ENCODE measurements at regions of chr22 and their contacts with region 1.

Region 1: DNA sequence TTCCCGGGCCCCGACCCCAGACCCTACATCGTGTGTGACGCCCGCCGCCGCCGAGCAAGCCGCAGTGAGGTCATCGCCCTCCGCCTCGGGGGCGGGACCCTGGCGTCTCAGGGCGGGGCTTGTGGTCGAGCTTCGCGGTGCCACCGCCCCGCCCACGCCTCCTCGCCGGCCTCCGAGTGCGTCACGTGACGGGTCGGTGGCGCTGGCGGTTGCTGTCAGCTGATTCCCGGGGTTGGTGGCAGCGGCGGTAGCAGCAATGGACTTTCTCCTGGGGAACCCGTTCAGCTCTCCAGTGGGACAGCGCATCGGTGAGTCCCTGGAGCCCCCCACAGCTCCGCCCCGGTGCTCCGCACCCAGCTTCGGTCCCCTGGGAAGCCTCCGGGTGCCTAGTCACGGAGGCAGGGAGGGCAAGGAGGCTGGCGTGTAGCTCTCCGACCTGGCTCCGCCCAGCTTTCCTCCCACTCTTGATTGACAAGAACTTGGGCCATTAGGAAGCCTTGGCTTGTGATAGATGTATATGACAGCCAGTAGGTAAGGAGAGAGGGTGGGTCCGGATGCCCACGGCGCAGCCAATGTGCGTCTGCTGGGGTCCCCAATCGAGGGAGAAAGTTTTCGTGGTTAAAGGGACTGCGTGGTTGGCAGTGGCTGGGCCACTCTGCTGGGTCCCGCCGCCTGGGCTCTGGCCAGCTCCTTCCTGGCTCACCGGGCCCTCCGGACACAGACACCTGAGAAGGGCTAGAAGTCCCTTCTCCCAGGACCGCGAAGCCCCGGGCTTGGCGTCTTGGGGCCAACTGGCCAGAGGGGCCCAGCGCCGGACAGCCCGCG is at the start of gene TOM1:
- DNase-seq: peak; percentile 95 to 99 (median 98)
- ATAC-seq: peak; percentile 83
- H3K4me3 ChIP-seq: peak within 1 kb of the TSS; percentile 75 to 86
- H3K4me3 Mint-ChIP-seq: peak within 1 kb of the TSS; percentile 94
- H3K27ac ChIP-seq: peak within 1 kb of the TSS; percentile 92 to 93
- H3K27ac Mint-ChIP-seq: peak within 1 kb of the TSS; percentile 99
- H3K4me1 ChIP-seq: peaks cover 13% of the 10 kb centered on the region
- H3K4me1 Mint-ChIP-seq: peaks cover 35% of the 10 kb centered on the region
- H3K27me3 ChIP-seq: no peaks in the 10 kb centered on the region
- H3K27me3 Mint-ChIP-seq: no peaks in the 10 kb centered on the region
- CTCF ChIP-seq: no peak
- total RNA-seq, gene TOM1: 166 to 170 TPM

Region 2: GRCh38 chr22:35257321-35258190 is 42.3 kb before region 1 on chr22 and contains the start of gene HMGXB4:
- CTCF ChIA-PET with region 1: interaction called, 7 read pairs
- POLR2A ChIA-PET with region 1: interaction called, 31 read pairs
- intact Hi-C with region 1: loop called (anchors 1 kb)
- DNase-seq: peak; percentile 74 to 95 (median 87)
- ATAC-seq: peak; percentile 91
- H3K4me3 ChIP-seq: peak within 1 kb of the TSS; percentile 72 to 90
- H3K4me3 Mint-ChIP-seq: peak within 1 kb of the TSS; percentile 93
- H3K27ac ChIP-seq: peak within 1 kb of the TSS; percentile 74 to 75
- H3K27ac Mint-ChIP-seq: peak within 1 kb of the TSS; percentile 96
- H3K4me1 ChIP-seq: peaks cover 16% of the 10 kb centered on the region
- H3K4me1 Mint-ChIP-seq: peaks cover 28% of the 10 kb centered on the region
- H3K27me3 ChIP-seq: no peaks in the 10 kb centered on the region
- H3K27me3 Mint-ChIP-seq: no peaks in the 10 kb centered on the region
- CTCF ChIP-seq: no peak
- total RNA-seq, gene HMGXB4: 42.6 to 47.0 TPM

Region 3: DNA sequence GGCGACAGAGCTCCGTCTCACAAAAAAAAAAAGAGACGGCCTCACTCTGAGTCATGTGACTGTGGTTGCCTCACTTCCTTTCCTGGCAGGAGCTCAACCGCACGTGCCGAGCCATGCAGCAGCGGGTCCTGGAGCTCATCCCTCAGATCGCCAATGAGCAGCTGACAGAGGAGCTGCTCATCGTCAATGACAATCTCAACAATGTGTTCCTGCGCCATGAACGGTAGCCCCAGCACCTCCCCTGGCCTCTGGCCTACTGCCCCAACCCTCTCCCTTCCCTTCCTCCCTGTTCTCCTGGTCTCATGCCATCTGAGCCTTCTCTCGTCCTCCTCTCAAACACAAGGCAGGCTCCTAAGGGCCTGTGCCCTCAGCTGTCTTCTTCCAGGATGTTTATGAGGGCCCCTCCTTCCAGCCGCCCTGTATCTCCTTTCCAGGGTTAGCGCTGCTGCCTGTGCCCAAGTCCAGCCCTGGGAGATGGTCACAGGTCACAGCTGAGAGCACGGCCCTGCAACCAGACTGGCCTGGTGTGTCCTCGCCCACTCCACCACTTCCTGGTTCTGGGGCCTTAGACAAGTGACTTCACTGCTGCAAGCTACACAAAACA is 30.5 kb after region 1 on chr22:
- CTCF ChIA-PET with region 1: interaction called, 3 read pairs
- POLR2A ChIA-PET with region 1: interaction called, 14 read pairs
- intact Hi-C with region 1: loop called in 1 of 2 experiments (anchors 5 kb)
- DNase-seq: peak in 8 of 9 experiments; percentile 29 to 72 (median 56)
- ATAC-seq: peak; percentile 47
- H3K4me3 ChIP-seq: no peak overlapping the region
- H3K4me3 Mint-ChIP-seq: peak overlapping the region; percentile 38
- H3K27ac ChIP-seq: no peak overlapping the region
- H3K27ac Mint-ChIP-seq: peak overlapping the region; percentile 79
- H3K4me1 ChIP-seq: peaks cover 23% of the 10 kb centered on the region
- H3K4me1 Mint-ChIP-seq: peaks cover 19% of the 10 kb centered on the region
- H3K27me3 ChIP-seq: no peaks in the 10 kb centered on the region
- H3K27me3 Mint-ChIP-seq: no peaks in the 10 kb centered on the region
- CTCF ChIP-seq: no peak

Region 4: DNA sequence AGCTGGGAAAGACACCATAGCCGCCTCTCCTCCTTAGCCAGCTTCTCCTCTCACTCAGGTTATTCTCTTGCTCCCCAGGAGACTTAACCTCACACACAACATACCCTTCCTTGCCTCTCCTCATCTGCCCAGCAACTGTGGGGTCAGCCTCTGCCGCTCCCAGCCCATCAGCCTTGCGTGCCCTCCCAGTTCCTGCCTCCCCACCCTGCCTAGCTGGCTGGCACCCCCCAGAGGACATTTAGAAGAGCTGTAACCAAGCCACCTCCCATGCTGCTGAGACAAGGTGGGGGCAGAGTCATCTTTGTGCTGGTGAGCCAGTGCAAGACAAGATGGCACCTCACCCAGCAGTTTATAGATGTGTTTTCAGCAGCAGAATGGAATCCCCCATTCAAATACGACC is 38.0 kb after region 1 on chr22:
- CTCF ChIA-PET with region 1: no interaction called
- POLR2A ChIA-PET with region 1: interaction called, 3 read pairs
- intact Hi-C with region 1: loop called in 1 of 2 experiments (anchors 5 kb)
- DNase-seq: peak in 3 of 9 experiments; percentile 37 to 52 (median 48)
- ATAC-seq: peak; percentile 65
- H3K4me3 ChIP-seq: no peak overlapping the region
- H3K4me3 Mint-ChIP-seq: no peak overlapping the region
- H3K27ac ChIP-seq: no peak overlapping the region
- H3K27ac Mint-ChIP-seq: no peak overlapping the region
- H3K4me1 ChIP-seq: no peaks in the 10 kb centered on the region
- H3K4me1 Mint-ChIP-seq: peaks cover 4% of the 10 kb centered on the region
- H3K27me3 ChIP-seq: no peaks in the 10 kb centered on the region
- H3K27me3 Mint-ChIP-seq: no peaks in the 10 kb centered on the region
- CTCF ChIP-seq: no peak

Region 5: GRCh38 chr22:35399678-35400334 is 99.9 kb after region 1 on chr22 and contains the start of gene MCM5:
- CTCF ChIA-PET with region 1: no interaction called
- POLR2A ChIA-PET with region 1: interaction called, 3 read pairs
- intact Hi-C with region 1: loop called in 1 of 2 experiments (anchors 1 kb)
- DNase-seq: peak; percentile 94 to 99 (median 97)
- ATAC-seq: peak; percentile 98
- H3K4me3 ChIP-seq: peak within 1 kb of the TSS; percentile 75 to 98
- H3K4me3 Mint-ChIP-seq: peak within 1 kb of the TSS; percentile 98
- H3K27ac ChIP-seq: peak within 1 kb of the TSS; percentile 73 to 75
- H3K27ac Mint-ChIP-seq: peak within 1 kb of the TSS; percentile 97
- H3K4me1 ChIP-seq: peaks cover 13% of the 10 kb centered on the region
- H3K4me1 Mint-ChIP-seq: peaks cover 17% of the 10 kb centered on the region
- H3K27me3 ChIP-seq: no peaks in the 10 kb centered on the region
- H3K27me3 Mint-ChIP-seq: no peaks in the 10 kb centered on the region
- CTCF ChIP-seq: no peak
- total RNA-seq, gene MCM5: 29.3 to 32.0 TPM

Region 6: DNA sequence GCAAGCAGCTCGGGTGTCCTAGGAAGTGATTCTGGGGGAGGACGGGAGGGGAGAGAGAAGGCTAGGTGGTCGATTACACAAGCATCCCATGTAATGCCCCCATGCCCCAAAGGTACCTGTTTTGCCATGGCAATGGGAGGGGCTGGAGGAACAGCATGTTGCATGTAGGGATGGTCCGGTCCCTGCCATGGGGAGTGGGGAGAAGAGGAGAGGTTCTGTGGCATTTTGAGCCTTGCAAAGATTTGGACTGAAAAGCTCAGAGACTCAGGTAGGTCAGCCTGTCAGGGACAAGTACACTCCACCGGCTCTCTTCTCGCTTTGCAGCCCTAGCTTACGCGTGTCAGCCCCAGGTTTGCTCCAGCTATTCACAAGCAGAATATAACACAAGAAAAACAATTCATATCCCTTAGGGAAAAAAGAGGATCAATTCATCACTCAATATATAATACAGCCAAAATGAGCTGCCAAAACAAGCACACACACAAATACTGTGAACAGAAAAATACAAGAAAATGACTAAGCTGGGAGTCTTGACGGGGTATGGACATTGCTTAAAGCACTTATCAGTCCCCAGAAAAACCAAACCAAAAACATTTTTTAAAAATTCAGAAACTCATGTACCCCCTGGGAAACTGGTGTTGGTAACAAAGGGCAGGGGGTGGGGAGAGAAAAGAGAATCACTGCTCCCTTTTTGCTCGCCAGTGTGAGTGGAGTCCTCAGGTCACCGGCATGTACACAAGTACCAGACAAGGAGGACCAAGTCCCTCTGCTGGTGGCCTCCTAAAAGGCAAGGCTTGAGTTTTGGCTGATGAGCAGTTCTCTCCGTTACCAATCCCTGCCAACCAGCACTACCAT is 439.4 kb after region 1 on chr22:
- CTCF ChIA-PET with region 1: no interaction called
- POLR2A ChIA-PET with region 1: no interaction called
- intact Hi-C with region 1: no loop called
- DNase-seq: peak in 2 of 9 experiments; percentile 20 to 35
- ATAC-seq: no peak
- H3K4me3 ChIP-seq: no peak overlapping the region
- H3K4me3 Mint-ChIP-seq: no peak overlapping the region
- H3K27ac ChIP-seq: no peak overlapping the region
- H3K27ac Mint-ChIP-seq: no peak overlapping the region
- H3K4me1 ChIP-seq: no peaks in the 10 kb centered on the region
- H3K4me1 Mint-ChIP-seq: no peaks in the 10 kb centered on the region
- H3K27me3 ChIP-seq: no peaks in the 10 kb centered on the region
- H3K27me3 Mint-ChIP-seq: peaks cover 3% of the 10 kb centered on the region
- CTCF ChIP-seq: no peak